Lower leg skin (tissue), 4 donors: ENCODE measurements at regions of chr13 and their contacts with region 1.

Region 1: DNA sequence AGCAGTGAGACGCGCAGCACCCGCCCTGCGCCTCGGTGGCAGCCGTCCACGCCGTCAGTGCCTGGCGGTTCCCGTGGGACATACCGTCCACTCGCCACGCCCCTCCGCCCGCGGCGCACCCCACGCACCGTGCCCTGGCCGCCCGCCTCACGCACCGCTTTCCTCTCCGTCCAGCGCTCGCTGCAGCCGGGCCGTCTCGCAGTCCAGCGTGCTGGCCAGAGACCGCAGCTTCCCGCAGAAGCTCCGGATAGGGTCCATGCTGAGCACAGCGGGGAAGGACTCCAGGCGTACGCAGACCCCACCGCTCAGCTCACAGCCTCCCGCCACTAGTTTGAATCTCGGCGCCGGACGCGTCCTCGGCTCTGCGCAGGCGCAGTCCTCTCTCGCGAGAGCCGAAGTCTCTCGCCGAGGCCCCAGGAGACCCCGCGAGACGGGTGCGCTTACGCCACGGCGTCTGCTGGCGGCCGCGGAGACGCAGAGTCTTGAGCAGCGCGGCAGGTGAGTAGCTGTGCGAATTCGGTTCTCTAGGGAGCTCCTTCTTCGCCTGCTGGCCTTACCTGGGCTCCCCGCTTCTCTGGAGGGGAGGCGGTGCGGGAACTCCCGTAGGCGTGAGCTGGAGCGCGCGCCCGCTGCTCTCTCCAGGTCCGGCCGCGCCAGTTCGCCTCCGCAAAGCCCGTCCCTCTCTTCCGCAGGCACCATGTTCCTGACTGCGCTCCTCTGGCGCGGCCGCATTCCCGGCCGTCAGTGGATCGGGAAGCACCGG is at the starts of genes MRPL57 and SKA3:
- DNase-seq: peak; percentile 86 to 98
- H3K4me3 ChIP-seq: peak within 1 kb of the TSS; percentile 87
- CTCF ChIP-seq: no peak
- POLR2A ChIP-seq: no peak
- total RNA-seq, gene MRPL57: 27.2 to 42.1 (median 29.8) TPM
- total RNA-seq, gene SKA3: 0.53 to 15.3 (median 2.0) TPM

Region 2: DNA sequence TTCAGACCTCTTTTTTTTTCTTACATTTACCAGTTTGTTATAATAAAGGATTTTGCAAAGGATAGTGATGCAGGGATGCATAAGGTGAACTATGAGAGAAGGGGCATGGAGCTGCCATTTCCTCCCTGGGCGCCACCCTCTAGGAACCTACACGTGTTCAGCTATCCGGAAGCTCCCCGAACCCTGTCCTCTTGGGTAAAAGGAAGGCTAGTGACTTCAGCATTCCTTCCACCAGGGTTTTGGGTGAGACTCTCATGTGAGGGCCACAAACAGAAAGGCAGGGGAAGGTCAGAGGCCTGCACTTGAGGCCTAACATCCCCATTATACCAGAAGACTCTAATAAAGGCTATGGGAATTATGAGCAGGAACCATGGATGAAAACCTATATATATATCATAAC is 552.2 kb before region 1 on chr13:
- intact Hi-C with region 1: no loop called
- DNase-seq: no peak
- H3K4me3 ChIP-seq: no peak overlapping the region
- CTCF ChIP-seq: no peak
- POLR2A ChIP-seq: no peak

Region 3: DNA sequence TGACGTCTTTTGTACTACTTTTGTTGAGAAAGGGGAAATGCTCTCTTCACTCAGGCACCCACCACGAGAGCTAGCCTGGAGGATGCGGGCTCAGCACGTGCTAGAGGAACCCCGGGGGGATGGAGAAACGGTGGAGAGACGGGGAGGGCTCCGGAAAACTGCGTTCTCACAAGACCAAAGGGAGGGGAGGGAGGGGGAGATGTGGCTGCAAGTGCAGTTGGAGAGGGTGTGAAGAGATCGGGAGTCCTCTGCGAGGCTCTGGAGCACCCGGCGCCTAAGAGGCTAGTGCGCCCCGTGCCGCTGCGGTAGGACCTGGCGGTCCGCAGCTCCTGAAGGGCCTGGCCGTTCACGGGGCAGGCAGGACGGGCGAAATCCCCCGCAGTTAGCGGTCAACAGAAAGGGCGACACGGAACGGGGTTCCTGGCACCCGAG is 230.4 kb before region 1 on chr13:
- intact Hi-C with region 1: loop called (anchors 5 kb)
- DNase-seq: peak in 1 of 2 donors; percentile 40
- H3K4me3 ChIP-seq: no peak overlapping the region
- CTCF ChIP-seq: no peak
- POLR2A ChIP-seq: no peak